Colonic mucosa (tissue), 4 donors: ENCODE measurements at regions of chr15 and their contacts with region 1.

Region 1: GRCh38 chr15:91947683-91948608 is 94.4 kb downstream of the SLCO3A1 start:
- DNase-seq: peak; percentile 34
- H3K4me3 ChIP-seq: no peak overlapping the region
- H3K27ac ChIP-seq: peak overlapping the region; percentile 15
- H3K4me1 ChIP-seq: peaks cover 11% of the 10 kb centered on the region
- H3K27me3 ChIP-seq: no peaks in the 10 kb centered on the region
- CTCF ChIP-seq: no peak

Region 2: DNA sequence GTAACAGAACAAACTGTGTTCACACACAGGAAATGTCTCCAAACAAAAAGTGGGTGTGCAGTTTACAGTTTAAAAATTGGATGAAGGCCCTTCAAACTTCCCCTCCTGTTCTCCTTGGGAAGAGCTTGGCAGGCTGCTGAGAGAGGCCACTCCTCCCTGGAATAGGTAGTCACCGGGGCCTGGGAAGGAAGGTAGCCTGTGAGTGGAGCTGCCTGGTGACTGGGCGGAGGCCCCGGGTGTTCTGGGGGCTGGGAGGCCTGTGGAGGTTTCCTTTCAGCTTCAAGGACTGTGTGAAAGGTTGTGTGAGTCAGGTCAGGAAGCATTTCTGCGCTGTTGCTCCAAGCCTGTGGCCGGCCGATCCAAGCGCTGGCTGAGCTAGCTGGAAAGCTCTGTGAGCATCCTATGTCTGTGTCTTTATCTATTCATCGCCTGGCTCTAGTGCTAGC is 80.3 kb before region 1 on chr15:
- intact Hi-C with region 1: loop called (anchors 5 kb)
- DNase-seq: peak; percentile 88
- H3K4me3 ChIP-seq: no peak overlapping the region
- H3K27ac ChIP-seq: peak overlapping the region; percentile 54
- H3K4me1 ChIP-seq: peaks cover 4% of the 10 kb centered on the region
- H3K27me3 ChIP-seq: no peaks in the 10 kb centered on the region
- CTCF ChIP-seq: no peak